ENCODE measurements at regions of chr11 and their contacts with region 1.

Region 1: DNA sequence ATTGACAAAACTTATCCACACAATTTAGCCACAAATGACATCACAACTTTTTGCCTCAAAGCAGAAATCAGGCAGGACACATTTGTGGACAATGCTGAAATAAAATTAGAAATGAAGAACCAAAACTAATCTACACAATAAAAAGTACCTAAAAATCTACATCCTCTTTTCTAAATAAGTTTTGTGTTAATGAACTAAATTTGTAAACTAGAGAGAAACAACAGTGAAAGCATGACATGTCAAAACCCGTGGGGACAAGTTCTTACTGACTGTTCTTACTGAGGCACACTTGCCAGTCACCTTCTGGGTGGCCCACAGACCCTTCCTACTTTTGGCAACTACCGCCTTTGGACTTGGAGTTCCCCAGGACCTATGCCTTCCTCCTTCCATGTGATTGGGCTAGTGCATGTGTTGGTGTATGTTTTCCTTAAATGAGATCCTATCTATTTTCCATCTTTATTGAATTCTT is 60.7 kb upstream of the MUC15 start:
- DNase-seq: peak; percentile 62
- ATAC-seq: peak; percentile 96
- H3K4me3 ChIP-seq: no peak overlapping the region
- H3K27ac ChIP-seq: peak overlapping the region; percentile 30; the same call in 1 of the 2 replicates
- H3K4me1 ChIP-seq: peaks cover 4% of the 10 kb centered on the region
- H3K27me3 ChIP-seq: no peaks in the 10 kb centered on the region
- CTCF ChIP-seq: no peak
- EP300 ChIP-seq: peak; percentile 76 to 82; a peak in 3 of 4 replicates
- POLR2A ChIP-seq: no peak
- RAD21 ChIP-seq: no peak

Region 2: GRCh38 chr11:26473216-26474194 is 159.2 kb before region 1 on chr11:
- CTCF ChIA-PET with region 1: interaction called, 3 read pairs
- POLR2A ChIA-PET with region 1: no interaction called
- RAD21 ChIA-PET with region 1: no interaction called
- SMC1A ChIA-PET with region 1: no interaction called
- in situ Hi-C with region 1: no loop called
- intact Hi-C with region 1: loop called (anchors 5 kb)
- DNase-seq: no peak
- ATAC-seq: peak; percentile 39
- H3K4me3 ChIP-seq: no peak overlapping the region
- H3K27ac ChIP-seq: no peak overlapping the region
- H3K4me1 ChIP-seq: no peaks in the 10 kb centered on the region
- H3K27me3 ChIP-seq: no peaks in the 10 kb centered on the region
- CTCF ChIP-seq: no peak
- EP300 ChIP-seq: no peak
- POLR2A ChIP-seq: no peak
- RAD21 ChIP-seq: no peak

Region 3: DNA sequence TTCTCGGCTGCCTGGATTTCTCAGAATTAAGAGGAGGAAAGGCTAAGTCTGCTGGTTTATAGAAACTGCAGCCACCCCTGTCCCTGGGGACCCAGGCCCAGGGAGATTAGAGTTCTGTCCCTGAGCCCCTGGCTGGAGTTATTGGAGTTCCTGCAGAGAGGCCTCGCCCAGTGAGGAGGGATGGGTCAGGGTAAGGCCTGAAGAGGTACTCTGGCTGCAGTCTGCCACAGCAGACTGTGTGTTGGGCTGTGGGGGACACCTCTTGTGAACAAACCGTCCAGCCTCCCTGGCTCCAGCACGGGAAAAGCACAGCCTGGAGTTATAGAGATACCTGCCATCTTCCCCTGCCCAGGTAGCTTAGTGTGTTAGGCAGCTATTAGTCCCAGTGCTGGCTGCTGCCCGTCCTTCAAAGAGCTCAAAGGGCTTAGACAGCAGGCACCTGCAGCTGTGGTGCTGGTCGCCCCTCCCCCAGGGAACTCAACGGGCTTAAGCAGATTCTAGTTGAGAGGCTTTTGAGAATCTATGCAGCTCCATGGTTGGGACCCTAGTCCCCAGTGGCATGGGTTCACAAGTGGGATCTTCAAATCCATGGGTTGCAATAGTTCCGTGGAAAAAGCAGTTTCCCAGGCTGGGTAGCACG is 24.1 kb before region 1 on chr11:
- CTCF ChIA-PET with region 1: interaction called, 6 read pairs
- POLR2A ChIA-PET with region 1: interaction called, 4 read pairs
- RAD21 ChIA-PET with region 1: interaction called, 14 read pairs
- SMC1A ChIA-PET with region 1: interaction called, 63 read pairs
- in situ Hi-C with region 1: no loop called
- intact Hi-C with region 1: loop called (anchors 2 kb)
- DNase-seq: no peak
- ATAC-seq: peak; percentile 66
- H3K4me3 ChIP-seq: no peak overlapping the region
- H3K27ac ChIP-seq: peak overlapping the region; percentile 58
- H3K4me1 ChIP-seq: peaks cover 4% of the 10 kb centered on the region; the same call in 1 of the 2 replicates
- H3K27me3 ChIP-seq: no peaks in the 10 kb centered on the region
- CTCF ChIP-seq: no peak
- EP300 ChIP-seq: no peak
- POLR2A ChIP-seq: no peak
- RAD21 ChIP-seq: no peak

Region 4: DNA sequence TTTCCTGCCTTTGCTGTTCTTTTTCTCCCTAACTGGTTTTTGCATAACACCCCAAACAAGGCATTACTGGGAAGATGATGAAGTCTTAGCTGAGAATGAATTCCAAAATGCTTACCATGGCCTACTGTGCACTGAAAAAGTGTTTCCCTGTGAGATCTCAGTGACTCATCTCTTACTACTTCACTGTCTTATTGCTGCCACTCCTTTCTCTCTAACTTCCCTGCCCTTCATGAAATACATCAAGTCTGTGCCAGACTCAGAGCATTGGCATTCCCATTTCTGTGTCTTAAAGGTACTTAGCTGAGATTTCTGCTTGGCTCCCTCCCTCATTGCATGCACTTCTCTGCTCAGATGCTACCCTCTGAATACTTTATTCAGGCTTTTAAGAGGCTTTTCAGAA is 11.6 kb before region 1 on chr11:
- CTCF ChIA-PET with region 1: interaction called, 4 read pairs
- POLR2A ChIA-PET with region 1: interaction called, 9 read pairs
- RAD21 ChIA-PET with region 1: interaction called, 7 read pairs
- SMC1A ChIA-PET with region 1: interaction called, 63 read pairs
- in situ Hi-C with region 1: no loop called
- intact Hi-C with region 1: no loop called
- DNase-seq: no peak
- ATAC-seq: peak; percentile 49
- H3K4me3 ChIP-seq: no peak overlapping the region
- H3K27ac ChIP-seq: no peak overlapping the region
- H3K4me1 ChIP-seq: no peaks in the 10 kb centered on the region
- H3K27me3 ChIP-seq: no peaks in the 10 kb centered on the region
- CTCF ChIP-seq: no peak
- EP300 ChIP-seq: no peak
- POLR2A ChIP-seq: no peak
- RAD21 ChIP-seq: no peak

Region 5: GRCh38 chr11:26704249-26704648 is 71.5 kb after region 1 on chr11:
- CTCF ChIA-PET with region 1: no interaction called
- POLR2A ChIA-PET with region 1: no interaction called
- RAD21 ChIA-PET with region 1: no interaction called
- SMC1A ChIA-PET with region 1: no interaction called
- in situ Hi-C with region 1: no loop called
- intact Hi-C with region 1: no loop called
- DNase-seq: no peak
- ATAC-seq: no peak
- H3K4me3 ChIP-seq: no peak overlapping the region
- H3K27ac ChIP-seq: no peak overlapping the region
- H3K4me1 ChIP-seq: no peaks in the 10 kb centered on the region
- H3K27me3 ChIP-seq: no peaks in the 10 kb centered on the region
- CTCF ChIP-seq: no peak
- EP300 ChIP-seq: no peak
- POLR2A ChIP-seq: no peak
- RAD21 ChIP-seq: no peak

Region 6: DNA sequence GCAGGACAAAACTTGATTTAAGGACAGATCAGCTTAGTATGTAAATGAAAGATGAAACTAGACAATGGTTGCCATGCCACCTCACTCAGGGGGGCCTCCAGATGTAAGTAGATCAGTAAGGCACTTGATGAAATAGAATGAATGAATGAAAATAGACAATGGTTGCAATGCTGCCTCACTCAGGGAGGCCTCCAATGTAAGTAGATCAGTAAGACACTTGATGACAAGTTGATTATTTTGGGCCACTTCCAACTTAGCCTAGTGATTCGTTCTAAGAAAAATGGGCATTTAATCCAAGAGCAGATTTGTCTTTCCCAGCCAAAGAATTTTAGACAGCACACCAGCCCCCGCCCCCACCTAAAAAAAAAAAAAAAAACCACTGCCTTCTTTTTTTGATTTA is 108.3 kb after region 1 on chr11:
- CTCF ChIA-PET with region 1: no interaction called
- POLR2A ChIA-PET with region 1: no interaction called
- RAD21 ChIA-PET with region 1: no interaction called
- SMC1A ChIA-PET with region 1: no interaction called
- in situ Hi-C with region 1: no loop called
- intact Hi-C with region 1: no loop called
- DNase-seq: no peak
- ATAC-seq: no peak
- H3K4me3 ChIP-seq: no peak overlapping the region
- H3K27ac ChIP-seq: no peak overlapping the region
- H3K4me1 ChIP-seq: no peaks in the 10 kb centered on the region
- H3K27me3 ChIP-seq: no peaks in the 10 kb centered on the region
- CTCF ChIP-seq: no peak
- EP300 ChIP-seq: no peak
- POLR2A ChIP-seq: no peak
- RAD21 ChIP-seq: no peak